ENCODE measurements at regions of chr20 and their contacts with region 1.

Region 1: GRCh38 chr20:44966030-44966961 is at the start of gene STK4:
- DNase-seq: peak; percentile 98
- ATAC-seq: peak; percentile 86
- H3K4me3 ChIP-seq: peak within 1 kb of the TSS; percentile 86 to 99 (median 90)
- H3K4me3 Mint-ChIP-seq: peak within 1 kb of the TSS; percentile 94
- H3K27ac ChIP-seq: peak within 1 kb of the TSS; percentile 91
- H3K27ac Mint-ChIP-seq: peak within 1 kb of the TSS; percentile 98
- H3K4me1 ChIP-seq: peaks cover 47 to 59% of the 10 kb centered on the region in 2 donors
- H3K4me1 Mint-ChIP-seq: peaks cover 54% of the 10 kb centered on the region
- H3K27me3 ChIP-seq: no peaks in the 10 kb centered on the region
- H3K27me3 Mint-ChIP-seq: no peaks in the 10 kb centered on the region
- CTCF ChIP-seq: peak; percentile 68
- total RNA-seq, gene STK4: 323 and 324 TPM in 2 replicates

Region 2: GRCh38 chr20:44521484-44522481 is 444.5 kb before region 1 on chr20 and contains the start of gene SERINC3:
- CTCF ChIA-PET with region 1: no interaction called
- POLR2A ChIA-PET with region 1: no interaction called
- intact Hi-C with region 1: loop called (anchors 5 kb)
- DNase-seq: peak; percentile 98
- ATAC-seq: peak; percentile 99
- H3K4me3 ChIP-seq: peak within 1 kb of the TSS; percentile 89 to 98 (median 95)
- H3K4me3 Mint-ChIP-seq: peak within 1 kb of the TSS; percentile 97
- H3K27ac ChIP-seq: peak within 1 kb of the TSS; percentile 94 to 95
- H3K27ac Mint-ChIP-seq: peak within 1 kb of the TSS; percentile 94
- H3K4me1 ChIP-seq: peaks cover 18 to 25% of the 10 kb centered on the region in 2 donors
- H3K4me1 Mint-ChIP-seq: peaks cover 51% of the 10 kb centered on the region
- H3K27me3 ChIP-seq: no peaks in the 10 kb centered on the region
- H3K27me3 Mint-ChIP-seq: peaks cover 1% of the 10 kb centered on the region
- CTCF ChIP-seq: no peak
- total RNA-seq, gene SERINC3: 51.6 and 56.7 TPM in 2 replicates

Region 3: DNA sequence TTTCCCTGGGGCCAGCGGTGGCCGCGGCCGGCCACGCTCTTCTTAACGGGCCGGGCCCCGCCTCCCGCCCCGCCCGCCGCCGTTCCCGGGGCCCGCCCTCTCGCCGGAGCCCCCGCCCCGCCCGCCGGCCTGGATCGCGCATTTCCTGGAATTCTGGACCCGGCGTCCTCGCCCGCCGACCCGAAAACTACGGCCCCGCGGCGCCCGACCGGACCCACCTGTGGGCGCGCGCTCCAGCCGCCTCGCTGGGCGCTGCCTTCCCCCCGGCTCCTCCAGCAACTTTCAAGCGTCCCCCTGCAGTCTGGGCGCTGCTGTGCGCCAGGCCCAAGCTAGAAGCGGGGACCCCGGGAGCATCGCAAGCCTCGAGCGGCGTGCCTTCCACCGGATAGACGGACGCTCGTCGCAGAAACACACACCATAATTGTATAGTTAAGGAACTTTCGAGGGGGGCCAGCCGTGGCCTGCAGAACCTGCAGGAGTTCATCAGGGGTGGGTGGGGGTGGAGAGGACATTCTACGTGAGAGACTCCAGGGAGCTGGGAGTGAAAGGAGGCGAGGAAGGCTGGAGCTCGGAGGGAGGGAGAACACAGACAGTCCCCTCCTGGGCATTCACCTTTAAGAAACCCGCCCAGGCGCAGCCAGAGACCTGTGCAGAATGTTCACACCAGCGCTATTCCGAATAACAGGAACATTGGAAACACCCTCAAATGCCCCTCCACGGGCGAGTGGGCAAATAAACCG is 314.4 kb before region 1 on chr20 and contains the start of gene ADA:
- CTCF ChIA-PET with region 1: no interaction called
- POLR2A ChIA-PET with region 1: no interaction called
- intact Hi-C with region 1: loop called (anchors 2 kb)
- DNase-seq: peak; percentile 65
- ATAC-seq: peak; percentile 52
- H3K4me3 ChIP-seq: peak within 1 kb of the TSS; percentile 67 to 89 (median 77)
- H3K4me3 Mint-ChIP-seq: peak within 1 kb of the TSS; percentile 88
- H3K27ac ChIP-seq: peak within 1 kb of the TSS in 1 of 2 donors; percentile 57
- H3K27ac Mint-ChIP-seq: peak within 1 kb of the TSS; percentile 84
- H3K4me1 ChIP-seq: peaks cover 26 to 36% of the 10 kb centered on the region in 2 donors
- H3K4me1 Mint-ChIP-seq: peaks cover 43% of the 10 kb centered on the region
- H3K27me3 ChIP-seq: no peaks in the 10 kb centered on the region
- H3K27me3 Mint-ChIP-seq: no peaks in the 10 kb centered on the region
- CTCF ChIP-seq: no peak
- total RNA-seq, gene ADA: 34.2 and 34.3 TPM in 2 replicates

Region 4: DNA sequence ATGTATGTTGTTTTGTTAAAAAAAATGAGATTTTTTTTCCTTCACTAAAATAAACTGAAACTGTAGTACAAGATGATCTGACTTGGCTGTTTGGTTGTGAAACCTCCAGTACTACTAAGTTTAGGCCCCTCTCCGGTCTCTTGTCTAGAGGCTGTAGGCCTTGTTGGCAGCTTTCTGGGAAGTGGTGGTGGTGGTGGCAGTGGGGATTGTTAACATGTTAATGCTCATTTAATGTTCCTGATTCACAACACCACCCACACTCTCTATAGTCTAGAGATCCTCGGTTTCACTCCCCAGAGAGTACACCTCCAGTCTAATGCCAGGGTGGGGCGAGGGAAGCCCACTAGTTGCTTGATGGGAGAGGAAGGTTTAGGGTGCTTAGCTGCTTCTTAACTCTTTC is 24.1 kb after region 1 on chr20:
- CTCF ChIA-PET with region 1: interaction called, 4 read pairs
- POLR2A ChIA-PET with region 1: interaction called, 4 read pairs
- intact Hi-C with region 1: loop called (anchors 2 kb)
- DNase-seq: no peak
- ATAC-seq: peak; percentile 57
- H3K4me3 ChIP-seq: peak overlapping the region in 3 of 5 experiments; percentile 2 to 20 (median 5)
- H3K4me3 Mint-ChIP-seq: peak overlapping the region; percentile 75
- H3K27ac ChIP-seq: peak overlapping the region; percentile 65 to 70
- H3K27ac Mint-ChIP-seq: peak overlapping the region; percentile 82
- H3K4me1 ChIP-seq: peaks cover 16 to 31% of the 10 kb centered on the region in 2 donors
- H3K4me1 Mint-ChIP-seq: peaks cover 61% of the 10 kb centered on the region
- H3K27me3 ChIP-seq: no peaks in the 10 kb centered on the region
- H3K27me3 Mint-ChIP-seq: no peaks in the 10 kb centered on the region
- CTCF ChIP-seq: no peak

Region 5: DNA sequence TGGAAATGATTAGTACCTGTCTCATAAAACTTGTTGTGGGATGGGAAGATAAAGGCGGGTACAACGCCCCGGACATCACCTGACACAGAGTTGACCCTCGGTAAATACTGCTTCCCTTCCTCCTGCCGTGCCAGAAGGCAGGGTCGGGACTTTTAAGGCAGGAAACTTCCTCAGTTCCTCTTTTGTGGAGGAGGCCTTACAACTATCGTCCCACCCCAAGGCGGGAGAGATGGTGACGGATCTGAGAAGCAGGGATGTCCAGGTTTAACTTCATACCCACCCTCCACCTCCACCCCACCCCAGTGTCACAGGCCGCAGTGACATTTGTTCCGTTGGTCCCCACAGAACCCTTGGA is 826.0 kb after region 1 on chr20:
- CTCF ChIA-PET with region 1: no interaction called
- POLR2A ChIA-PET with region 1: no interaction called
- intact Hi-C with region 1: loop called (anchors 2 kb)
- DNase-seq: peak; percentile 61
- ATAC-seq: peak; percentile 22
- H3K4me3 ChIP-seq: peak overlapping the region; percentile 72 to 95 (median 89)
- H3K4me3 Mint-ChIP-seq: peak overlapping the region; percentile 90
- H3K27ac ChIP-seq: peak overlapping the region; percentile 75 to 96
- H3K27ac Mint-ChIP-seq: peak overlapping the region; percentile 93
- H3K4me1 ChIP-seq: peaks cover 8 to 13% of the 10 kb centered on the region in 2 donors
- H3K4me1 Mint-ChIP-seq: peaks cover 19% of the 10 kb centered on the region
- H3K27me3 ChIP-seq: no peaks in the 10 kb centered on the region
- H3K27me3 Mint-ChIP-seq: no peaks in the 10 kb centered on the region
- CTCF ChIP-seq: no peak